ENCODE measurements at regions of chr3 and their contacts with region 1.

Region 1: DNA sequence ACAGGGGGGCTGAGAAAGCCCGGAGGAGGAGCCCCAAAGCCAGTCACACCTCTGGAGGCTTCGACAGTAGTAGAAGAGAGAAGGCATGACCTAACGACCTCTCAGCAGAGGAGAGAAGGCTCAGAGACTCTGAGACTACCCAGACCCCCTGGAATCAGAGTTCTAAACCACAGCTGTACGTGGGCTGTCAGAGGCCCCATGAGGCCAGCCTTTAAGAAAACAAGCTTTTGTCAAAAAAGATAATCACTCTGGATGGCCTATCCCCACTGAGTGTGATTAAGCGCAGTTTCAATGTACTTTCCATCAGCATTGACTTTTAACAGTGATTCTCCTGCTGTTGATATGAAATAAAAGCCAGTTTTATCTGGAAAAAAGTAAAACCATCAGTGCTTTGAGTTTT is 330.3 kb downstream of the CLSTN2 start:
- DNase-seq: no peak
- ATAC-seq: peak; percentile 41
- H3K4me3 Mint-ChIP-seq: no peak overlapping the region
- H3K27ac Mint-ChIP-seq: no peak overlapping the region
- H3K4me1 Mint-ChIP-seq: peaks cover 15% of the 10 kb centered on the region
- H3K27me3 Mint-ChIP-seq: no peaks in the 10 kb centered on the region; the same call in 1 of the 2 replicates
- CTCF ChIP-seq: no peak

Region 2: DNA sequence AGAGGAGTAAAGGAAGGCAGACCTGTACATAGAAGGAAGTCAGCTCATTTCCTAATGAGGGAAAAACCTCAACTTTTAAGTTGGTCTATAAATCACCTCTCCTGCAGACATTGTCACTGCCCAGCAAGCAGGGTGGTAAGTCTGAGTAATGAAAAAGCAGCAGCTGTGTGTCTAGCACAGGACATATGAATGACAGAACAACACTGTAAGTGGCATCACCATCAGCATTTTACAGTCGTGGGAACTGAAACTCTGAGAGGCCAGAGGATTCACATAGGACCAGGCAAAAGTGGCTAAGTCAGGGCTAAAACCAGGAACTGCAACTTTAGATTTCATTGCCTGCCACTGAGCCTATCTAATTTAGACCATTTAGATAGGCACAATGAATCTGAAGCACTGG is 94.7 kb before region 1 on chr3:
- CTCF ChIA-PET with region 1: no interaction called
- POLR2A ChIA-PET with region 1: no interaction called
- DNase-seq: no peak
- ATAC-seq: no peak
- H3K4me3 Mint-ChIP-seq: no peak overlapping the region
- H3K27ac Mint-ChIP-seq: no peak overlapping the region
- H3K4me1 Mint-ChIP-seq: peaks cover 9% of the 10 kb centered on the region
- H3K27me3 Mint-ChIP-seq: no peaks in the 10 kb centered on the region
- CTCF ChIP-seq: no peak

Region 3: GRCh38 chr3:140206196-140207048 is 58.9 kb before region 1 on chr3:
- CTCF ChIA-PET with region 1: no interaction called
- POLR2A ChIA-PET with region 1: no interaction called
- DNase-seq: peak; percentile 38
- ATAC-seq: peak; percentile 51
- H3K4me3 Mint-ChIP-seq: no peak overlapping the region
- H3K27ac Mint-ChIP-seq: no peak overlapping the region
- H3K4me1 Mint-ChIP-seq: peaks cover 58% of the 10 kb centered on the region
- H3K27me3 Mint-ChIP-seq: peaks cover 16% of the 10 kb centered on the region
- CTCF ChIP-seq: no peak

Region 4: DNA sequence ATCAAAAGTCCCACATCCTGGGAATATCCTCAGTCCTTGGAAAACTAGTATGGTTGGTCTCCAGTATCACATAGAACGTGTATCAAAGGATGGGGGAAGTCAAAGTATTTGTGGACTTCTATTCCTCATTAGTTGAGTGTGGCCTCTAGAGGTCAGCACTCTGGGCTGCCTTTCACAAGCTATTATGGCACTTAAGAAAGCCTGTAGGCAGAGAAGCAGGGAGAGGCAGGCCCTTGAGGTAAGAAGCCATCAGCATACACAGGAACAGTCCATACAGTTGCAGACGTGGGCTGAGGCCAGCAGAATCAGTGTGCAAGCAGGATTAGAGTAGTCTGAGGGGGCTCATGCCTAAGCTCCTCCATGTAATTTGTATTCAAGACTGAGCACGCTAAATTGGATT is 11.4 kb after region 1 on chr3:
- CTCF ChIA-PET with region 1: interaction called, 28 read pairs
- POLR2A ChIA-PET with region 1: no interaction called
- DNase-seq: peak; percentile 36
- ATAC-seq: peak; percentile 97
- H3K4me3 Mint-ChIP-seq: no peak overlapping the region
- H3K27ac Mint-ChIP-seq: no peak overlapping the region
- H3K4me1 Mint-ChIP-seq: peaks cover 11% of the 10 kb centered on the region
- H3K27me3 Mint-ChIP-seq: peaks cover 4% of the 10 kb centered on the region; the same call in 1 of the 2 replicates
- CTCF ChIP-seq: no peak

Region 5: GRCh38 chr3:140332131-140332530 is 66.8 kb after region 1 on chr3:
- CTCF ChIA-PET with region 1: no interaction called
- POLR2A ChIA-PET with region 1: no interaction called
- DNase-seq: no peak
- ATAC-seq: peak; percentile 32; the same call in 1 of the 2 replicates
- H3K4me3 Mint-ChIP-seq: no peak overlapping the region
- H3K27ac Mint-ChIP-seq: no peak overlapping the region
- H3K4me1 Mint-ChIP-seq: peaks cover 16% of the 10 kb centered on the region
- H3K27me3 Mint-ChIP-seq: peaks cover 6% of the 10 kb centered on the region; the same call in 1 of the 2 replicates
- CTCF ChIP-seq: no peak

Region 6: GRCh38 chr3:140974900-140975299 is 709.6 kb after region 1 on chr3:
- CTCF ChIA-PET with region 1: no interaction called
- POLR2A ChIA-PET with region 1: no interaction called
- DNase-seq: no peak
- ATAC-seq: no peak
- H3K4me3 Mint-ChIP-seq: no peak overlapping the region
- H3K27ac Mint-ChIP-seq: no peak overlapping the region
- H3K4me1 Mint-ChIP-seq: no peaks in the 10 kb centered on the region
- H3K27me3 Mint-ChIP-seq: no peaks in the 10 kb centered on the region
- CTCF ChIP-seq: no peak

Measured in WTC11 (cell line).